ENCODE measurements at regions of chr2 and their contacts with region 1.

Region 1: GRCh38 chr2:215949991-215950404 is 63.4 kb downstream of the MREG start:
- DNase-seq: no peak
- ATAC-seq: peak; percentile 90
- H3K4me3 Mint-ChIP-seq: no peak overlapping the region
- H3K27ac Mint-ChIP-seq: no peak overlapping the region
- H3K4me1 Mint-ChIP-seq: peaks cover 3% of the 10 kb centered on the region
- H3K27me3 Mint-ChIP-seq: no peaks in the 10 kb centered on the region

Region 2: GRCh38 chr2:215476424-215476823 is 473.6 kb before region 1 on chr2:
- CTCF ChIA-PET with region 1: no interaction called
- DNase-seq: no peak
- ATAC-seq: no peak
- H3K4me3 Mint-ChIP-seq: no peak overlapping the region
- H3K27ac Mint-ChIP-seq: no peak overlapping the region
- H3K4me1 Mint-ChIP-seq: no peaks in the 10 kb centered on the region
- H3K27me3 Mint-ChIP-seq: peaks cover 10% of the 10 kb centered on the region

Region 3: GRCh38 chr2:215931256-215931903 is 18.6 kb before region 1 on chr2:
- CTCF ChIA-PET with region 1: interaction called, 14 read pairs
- DNase-seq: peak; percentile 72
- ATAC-seq: peak; percentile 73
- H3K4me3 Mint-ChIP-seq: no peak overlapping the region
- H3K27ac Mint-ChIP-seq: no peak overlapping the region
- H3K4me1 Mint-ChIP-seq: peaks cover 16% of the 10 kb centered on the region
- H3K27me3 Mint-ChIP-seq: peaks cover 3% of the 10 kb centered on the region

Region 4: GRCh38 chr2:215937190-215937589 is 12.8 kb before region 1 on chr2:
- CTCF ChIA-PET with region 1: interaction called, 14 read pairs
- DNase-seq: no peak
- ATAC-seq: no peak
- H3K4me3 Mint-ChIP-seq: no peak overlapping the region
- H3K27ac Mint-ChIP-seq: no peak overlapping the region
- H3K4me1 Mint-ChIP-seq: no peaks in the 10 kb centered on the region
- H3K27me3 Mint-ChIP-seq: no peaks in the 10 kb centered on the region

Region 5: DNA sequence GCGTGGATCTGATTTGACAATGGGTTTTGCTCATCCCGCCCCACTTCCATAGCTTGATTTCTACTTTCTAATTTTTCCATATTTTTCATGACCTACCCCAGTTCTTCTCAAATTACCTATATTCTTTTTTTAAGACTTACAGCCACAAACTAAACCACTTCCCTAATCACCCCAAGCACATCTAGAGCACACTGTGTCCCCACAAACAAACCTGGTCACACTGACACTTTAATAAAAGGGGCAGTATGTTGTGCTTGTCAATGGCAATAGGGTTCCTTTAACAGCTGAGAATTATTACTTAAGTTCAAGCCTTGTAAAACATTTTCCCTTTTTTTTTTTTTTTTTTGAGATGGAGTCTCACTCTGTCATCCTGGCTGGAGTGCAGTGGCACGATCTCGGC is 16.3 kb after region 1 on chr2:
- CTCF ChIA-PET with region 1: interaction called, 20 read pairs
- DNase-seq: no peak
- ATAC-seq: peak; percentile 47
- H3K4me3 Mint-ChIP-seq: peak overlapping the region; percentile 56
- H3K27ac Mint-ChIP-seq: peak overlapping the region; percentile 73
- H3K4me1 Mint-ChIP-seq: peaks cover 61% of the 10 kb centered on the region
- H3K27me3 Mint-ChIP-seq: no peaks in the 10 kb centered on the region

Region 6: GRCh38 chr2:216006164-216006663 is 56.2 kb after region 1 on chr2:
- CTCF ChIA-PET with region 1: interaction called, 40 read pairs
- DNase-seq: peak; percentile 80
- ATAC-seq: peak; percentile 75
- H3K4me3 Mint-ChIP-seq: peak overlapping the region; percentile 45
- H3K27ac Mint-ChIP-seq: peak overlapping the region; percentile 90
- H3K4me1 Mint-ChIP-seq: peaks cover 64% of the 10 kb centered on the region
- H3K27me3 Mint-ChIP-seq: no peaks in the 10 kb centered on the region

Region 7: DNA sequence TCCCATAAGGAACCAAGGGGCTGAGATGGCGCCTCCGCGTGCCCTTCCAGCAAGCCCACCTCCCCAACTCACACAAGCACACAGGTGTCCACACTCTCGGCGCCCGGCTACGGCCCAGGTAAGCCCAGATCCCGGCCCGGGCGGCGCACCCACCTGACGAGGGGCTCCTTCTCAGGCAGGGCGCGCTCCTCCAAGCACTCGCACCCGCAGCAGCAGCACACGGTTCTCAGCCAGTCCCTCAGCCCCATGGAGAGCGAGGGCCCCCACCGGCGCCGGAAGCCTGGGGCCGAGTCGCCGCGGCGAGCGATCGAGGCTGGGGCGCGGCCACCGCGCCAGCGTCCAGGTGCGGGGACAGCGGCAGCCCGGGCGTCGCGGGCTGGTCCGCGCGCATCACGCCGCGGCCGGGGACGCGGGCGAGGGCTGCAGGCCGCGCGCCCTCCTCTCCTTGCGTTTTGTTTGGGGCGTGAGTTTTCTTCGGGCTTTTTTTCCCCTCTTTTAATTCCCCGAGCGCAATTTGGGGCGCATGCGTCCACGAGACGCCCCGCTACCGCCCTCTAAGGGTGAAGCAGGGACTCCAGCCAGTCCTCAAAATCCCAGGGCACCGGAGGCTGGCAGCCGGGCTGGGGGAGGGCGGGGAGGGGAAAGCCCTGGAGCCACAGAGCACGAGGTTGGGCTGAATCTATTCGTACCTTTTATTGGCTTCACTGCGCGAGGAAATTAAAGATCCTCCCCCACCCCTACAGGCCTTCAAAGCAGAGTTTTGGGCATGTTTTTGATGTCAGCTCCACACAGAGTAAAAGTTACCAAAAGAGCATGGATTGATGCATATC is 63.3 kb after region 1 on chr2 and contains the start of gene MREG:
- CTCF ChIA-PET with region 1: interaction called, 40 read pairs
- DNase-seq: peak; percentile 91
- ATAC-seq: peak; percentile 73
- H3K4me3 Mint-ChIP-seq: peak within 1 kb of the TSS; percentile 90
- H3K27ac Mint-ChIP-seq: peak within 1 kb of the TSS; percentile 69
- H3K4me1 Mint-ChIP-seq: peaks cover 66% of the 10 kb centered on the region
- H3K27me3 Mint-ChIP-seq: no peaks in the 10 kb centered on the region
- total RNA-seq, gene MREG: 16.2 to 26.7 TPM

Region 8: DNA sequence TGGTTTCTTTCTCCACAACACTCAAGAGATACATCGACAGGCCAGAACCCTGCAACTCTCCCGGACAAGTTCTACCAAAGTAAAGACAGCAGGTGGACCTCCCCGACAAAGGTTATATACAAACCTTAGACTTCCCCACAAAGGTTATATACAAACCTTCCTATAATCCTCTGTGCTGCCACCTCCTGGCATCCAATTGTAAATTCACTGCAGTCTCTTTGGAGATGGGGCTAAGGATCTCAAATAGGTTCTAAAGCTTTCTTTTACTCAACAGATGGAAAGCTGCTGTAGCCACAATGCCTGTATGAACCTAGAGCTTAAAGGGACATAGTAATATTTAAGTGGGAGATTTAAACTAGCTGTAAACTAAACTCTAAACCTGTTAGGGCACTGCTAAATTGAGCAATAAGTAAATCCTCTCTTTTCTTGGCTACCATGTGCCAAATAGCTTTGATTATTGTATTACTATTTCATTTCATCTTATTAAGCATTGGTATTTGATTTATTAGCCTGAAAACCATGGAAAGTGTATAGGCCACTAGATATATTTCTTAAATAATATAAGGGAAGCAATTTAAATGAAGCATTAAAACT is 73.2 kb after region 1 on chr2:
- CTCF ChIA-PET with region 1: interaction called, 71 read pairs
- DNase-seq: peak; percentile 66
- ATAC-seq: peak; percentile 93
- H3K4me3 Mint-ChIP-seq: no peak overlapping the region
- H3K27ac Mint-ChIP-seq: no peak overlapping the region
- H3K4me1 Mint-ChIP-seq: peaks cover 10% of the 10 kb centered on the region
- H3K27me3 Mint-ChIP-seq: no peaks in the 10 kb centered on the region

Measured in activated CD8-positive, alpha-beta memory T cell treated with anti-CD3 and anti-CD28 coated beads, Interleukin-2, amount 10 ng/mL, durations not matched to agents 7 days and 5 days (primary cell).